SK-N-SH (cell line): ENCODE measurements at regions of chr7 and their contacts with region 1.

Region 1: GRCh38 chr7:134943764-134944400 is 42.4 kb upstream of the AGBL3 start:
- DNase-seq: peak; percentile 74
- H3K4me3 ChIP-seq: no peak overlapping the region
- H3K27ac ChIP-seq: no peak overlapping the region; a peak in 1 of 4 replicates
- H3K4me1 ChIP-seq: peaks cover 7 to 12% of the 10 kb centered on the region in 2 experiments; a peak in 2 of 4 replicates
- H3K27me3 ChIP-seq: no peaks in the 10 kb centered on the region
- CTCF ChIP-seq: peak; percentile 65
- EP300 ChIP-seq: no peak
- RAD21 ChIP-seq: peak; percentile 94

Region 2: GRCh38 chr7:134619627-134620331 is 324.1 kb before region 1 on chr7:
- CTCF ChIA-PET with region 1: interaction called, 22 read pairs
- POLR2A ChIA-PET with region 1: no interaction called
- DNase-seq: no peak
- H3K4me3 ChIP-seq: no peak overlapping the region
- H3K27ac ChIP-seq: peak overlapping the region in 1 of 2 experiments; percentile 99; a peak in 2 of 4 replicates
- H3K4me1 ChIP-seq: peaks cover 0 to 27% of the 10 kb centered on the region in 2 experiments; a peak in 1 of 4 replicates
- H3K27me3 ChIP-seq: no peaks in the 10 kb centered on the region
- CTCF ChIP-seq: no peak
- EP300 ChIP-seq: peak in 1 of 2 experiments; percentile 48; a peak in 1 of 4 replicates
- RAD21 ChIP-seq: no peak

Region 3: GRCh38 chr7:134701272-134701671 is 242.6 kb before region 1 on chr7:
- CTCF ChIA-PET with region 1: interaction called, 114 read pairs
- POLR2A ChIA-PET with region 1: no interaction called
- DNase-seq: peak; percentile 48
- H3K4me3 ChIP-seq: no peak overlapping the region
- H3K27ac ChIP-seq: no peak overlapping the region
- H3K4me1 ChIP-seq: no peaks in the 10 kb centered on the region; a peak in 2 of 4 replicates
- H3K27me3 ChIP-seq: no peaks in the 10 kb centered on the region
- CTCF ChIP-seq: peak; percentile 62
- EP300 ChIP-seq: no peak
- RAD21 ChIP-seq: peak; percentile 66

Region 4: DNA sequence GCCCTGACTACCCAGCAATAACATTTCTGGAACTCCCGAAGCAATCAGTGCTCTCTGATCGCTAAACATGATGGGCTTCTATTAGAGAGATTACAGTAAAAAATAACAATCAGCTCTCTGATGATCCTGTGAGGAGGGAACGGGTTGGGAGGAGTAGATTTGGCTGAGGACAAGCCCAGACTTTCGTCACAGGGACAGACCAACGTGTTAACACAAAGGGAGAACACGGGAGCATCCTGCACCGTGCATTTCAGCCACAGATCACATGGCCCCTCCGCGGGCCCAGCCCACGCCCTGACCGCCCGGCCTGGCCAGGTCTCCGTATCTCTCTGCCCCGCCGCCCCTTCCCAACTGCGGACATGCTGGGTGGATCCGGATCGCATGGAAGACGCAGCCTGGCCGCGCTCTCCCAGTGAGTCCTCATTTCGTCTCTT is 52.6 kb before region 1 on chr7:
- CTCF ChIA-PET with region 1: interaction called, 11 read pairs
- POLR2A ChIA-PET with region 1: no interaction called
- DNase-seq: peak; percentile 88
- H3K4me3 ChIP-seq: peak overlapping the region; percentile 58 to 70
- H3K27ac ChIP-seq: peak overlapping the region; percentile 90 to 96
- H3K4me1 ChIP-seq: peaks cover 25 to 36% of the 10 kb centered on the region in 2 experiments
- H3K27me3 ChIP-seq: no peaks in the 10 kb centered on the region
- CTCF ChIP-seq: no peak
- EP300 ChIP-seq: 0 out of 4 replicates have a peak, but pooled peaks of 1 of the 2 experiments have one; percentile 33
- RAD21 ChIP-seq: no peak